Esophagus muscularis mucosa (tissue), 4 donors: ENCODE measurements at regions of chr13 and their contacts with region 1.

Region 1: GRCh38 chr13:48580185-48580803 is 47.4 kb upstream of the RCBTB2 start:
- DNase-seq: peak; percentile 93
- H3K4me3 ChIP-seq: no peak overlapping the region
- H3K27ac ChIP-seq: no peak overlapping the region
- H3K4me1 ChIP-seq: peaks cover 17 to 31% (median 23%) of the 10 kb centered on the region in 4 donors
- H3K27me3 ChIP-seq: no peaks in the 10 kb centered on the region
- CTCF ChIP-seq: peak; percentile 78 to 84 (median 80)
- EP300 ChIP-seq: no peak
- POLR2A ChIP-seq: no peak

Region 2: GRCh38 chr13:48126944-48127830 is 453.1 kb before region 1 on chr13:
- intact Hi-C with region 1: loop called (anchors 10 kb)
- DNase-seq: no peak
- H3K4me3 ChIP-seq: no peak overlapping the region
- H3K27ac ChIP-seq: peak overlapping the region; percentile 75 to 85 (median 80)
- H3K4me1 ChIP-seq: peaks cover 35 to 54% (median 54%) of the 10 kb centered on the region in 4 donors
- H3K27me3 ChIP-seq: no peaks in the 10 kb centered on the region
- CTCF ChIP-seq: peak; percentile 67 to 82 (median 74)
- EP300 ChIP-seq: no peak
- POLR2A ChIP-seq: no peak

Region 3: GRCh38 chr13:48278806-48279205 is 301.5 kb before region 1 on chr13:
- intact Hi-C with region 1: no loop called
- DNase-seq: no peak
- H3K4me3 ChIP-seq: no peak overlapping the region
- H3K27ac ChIP-seq: no peak overlapping the region
- H3K4me1 ChIP-seq: peaks cover 0 to 5% (median 0%) of the 10 kb centered on the region in 4 donors
- H3K27me3 ChIP-seq: no peaks in the 10 kb centered on the region
- CTCF ChIP-seq: no peak
- EP300 ChIP-seq: no peak
- POLR2A ChIP-seq: no peak

Region 4: DNA sequence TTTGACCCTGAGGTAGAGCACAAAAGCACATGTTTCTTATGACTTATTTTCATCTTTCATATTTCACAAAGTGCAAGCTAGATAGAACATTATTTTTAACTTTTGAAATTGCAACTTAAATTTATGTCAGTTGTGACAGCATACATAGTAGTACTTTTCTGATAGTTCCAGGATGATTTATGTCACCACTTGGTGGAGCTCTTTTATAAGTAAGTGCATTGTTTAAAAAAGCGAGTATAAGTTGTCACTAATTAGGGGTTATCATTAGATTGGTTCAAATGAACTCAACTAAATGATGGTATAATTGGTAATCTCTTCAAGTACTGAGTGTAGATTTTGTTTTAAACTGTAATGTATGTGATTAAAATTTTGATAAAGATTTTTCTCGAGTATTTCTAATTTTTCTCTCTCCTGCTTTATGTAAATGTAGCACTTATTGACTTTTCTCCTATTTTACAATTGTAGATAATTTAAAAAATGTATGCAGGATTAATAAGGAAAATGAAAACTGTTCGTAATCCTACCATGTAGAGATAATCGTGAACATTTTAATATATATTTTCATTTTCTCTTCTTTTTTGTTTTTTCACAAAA is 245.7 kb before region 1 on chr13:
- intact Hi-C with region 1: loop called (anchors 5 kb)
- DNase-seq: no peak
- H3K4me3 ChIP-seq: no peak overlapping the region
- H3K27ac ChIP-seq: no peak overlapping the region
- H3K4me1 ChIP-seq: peaks cover 0 to 9% (median 0%) of the 10 kb centered on the region in 4 donors
- H3K27me3 ChIP-seq: no peaks in the 10 kb centered on the region
- CTCF ChIP-seq: peak; percentile 46 to 58 (median 54)
- EP300 ChIP-seq: no peak
- POLR2A ChIP-seq: no peak

Region 5: DNA sequence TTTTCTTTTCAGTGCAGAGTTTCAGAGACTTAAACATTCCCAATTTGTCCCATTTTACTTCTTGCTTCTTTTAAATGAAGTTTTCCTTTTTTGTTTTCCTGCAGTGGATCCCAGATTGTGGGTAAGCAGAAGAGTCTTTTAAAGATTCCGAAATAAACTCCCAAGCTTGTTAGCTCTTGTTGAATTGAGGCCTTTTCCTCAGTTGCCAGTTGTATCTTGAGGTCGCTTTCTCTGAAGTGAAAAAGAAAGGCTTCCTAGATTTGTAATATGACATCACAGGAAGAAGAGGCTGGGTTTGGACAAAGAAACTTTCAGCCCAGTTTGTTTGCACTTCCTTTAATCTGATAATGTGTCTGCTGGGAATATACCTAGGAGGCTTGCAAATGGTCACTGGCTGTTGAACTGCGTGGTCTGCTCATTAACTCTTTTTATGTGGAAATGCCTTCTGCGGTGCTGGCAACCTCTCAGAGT is 167.4 kb before region 1 on chr13 and contains the start of gene LPAR6:
- intact Hi-C with region 1: loop called (anchors 5 kb)
- DNase-seq: no peak
- H3K4me3 ChIP-seq: peak within 1 kb of the TSS; percentile 36 to 56 (median 52)
- H3K27ac ChIP-seq: peak within 1 kb of the TSS; percentile 64 to 76 (median 66)
- H3K4me1 ChIP-seq: peaks cover 0 to 4% (median 0%) of the 10 kb centered on the region in 4 donors
- H3K27me3 ChIP-seq: no peaks in the 10 kb centered on the region
- CTCF ChIP-seq: no peak
- EP300 ChIP-seq: no peak
- POLR2A ChIP-seq: peak; percentile 31
- total RNA-seq, gene LPAR6: 7.8 to 14.2 (median 8.8) TPM

Region 6: DNA sequence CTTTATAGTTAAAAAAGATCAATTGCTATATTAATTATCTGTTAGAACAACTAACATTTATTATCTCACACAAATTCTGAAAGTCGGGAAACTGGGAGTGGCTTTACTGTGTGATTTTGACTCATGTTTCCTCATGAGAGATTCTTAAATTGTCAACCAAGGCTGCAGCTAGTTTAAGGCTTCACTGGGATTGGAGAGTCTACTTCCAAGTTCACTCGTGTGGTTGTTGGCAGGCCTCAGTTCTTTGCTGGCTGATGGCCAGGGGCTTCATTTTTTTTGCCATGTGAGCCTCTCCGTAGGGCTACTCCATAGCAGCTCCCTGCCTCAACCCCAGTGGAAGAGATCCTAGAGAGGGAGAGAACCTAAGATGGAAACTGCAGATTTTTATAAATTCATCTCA is 142.9 kb before region 1 on chr13:
- intact Hi-C with region 1: no loop called
- DNase-seq: no peak
- H3K4me3 ChIP-seq: no peak overlapping the region
- H3K27ac ChIP-seq: peak overlapping the region in 3 of 4 donors; percentile 26 to 38 (median 30)
- H3K4me1 ChIP-seq: peaks cover 14 to 22% (median 16%) of the 10 kb centered on the region in 4 donors
- H3K27me3 ChIP-seq: no peaks in the 10 kb centered on the region
- CTCF ChIP-seq: no peak
- EP300 ChIP-seq: no peak
- POLR2A ChIP-seq: no peak